IMR-90 (cell line): ENCODE measurements at regions of chr16 and their contacts with region 1.

Region 1: GRCh38 chr16:29700253-29700987 is 21.4 kb downstream of the QPRT start:
- DNase-seq: peak; percentile 87
- ATAC-seq: peak; percentile 99
- H3K4me3 ChIP-seq: no peak overlapping the region
- H3K27ac ChIP-seq: no peak overlapping the region
- H3K4me1 ChIP-seq: no peaks in the 10 kb centered on the region
- H3K27me3 ChIP-seq: peaks cover 10% of the 10 kb centered on the region; the same call in 1 of the 2 replicates
- CTCF ChIP-seq: peak; percentile 98
- POLR2A ChIP-seq: no peak
- RAD21 ChIP-seq: peak; percentile 97

Region 2: DNA sequence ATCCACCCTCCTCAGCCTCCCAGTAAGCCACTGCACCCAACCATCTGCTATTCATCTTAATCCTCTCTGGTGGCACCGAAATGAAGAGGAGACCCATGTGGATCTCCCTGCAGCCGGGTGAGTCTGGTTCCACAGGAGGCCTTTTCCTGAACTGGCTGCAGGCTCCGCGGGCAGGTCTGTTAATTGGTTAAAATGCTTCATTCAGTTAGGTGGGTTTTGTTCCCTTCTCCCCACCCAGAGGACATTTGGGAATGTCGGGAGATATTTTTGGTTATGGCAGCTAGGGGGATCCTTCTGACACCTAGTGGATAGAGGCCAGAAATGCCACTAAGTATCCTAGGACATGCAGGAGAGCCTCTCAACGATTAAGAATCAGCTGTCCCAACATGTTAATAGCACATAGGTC is 28.7 kb after region 1 on chr16:
- CTCF ChIA-PET with region 1: interaction called, 5 read pairs
- POLR2A ChIA-PET with region 1: no interaction called
- dilution Hi-C with region 1: no loop called
- in situ Hi-C with region 1: no loop called
- intact Hi-C with region 1: loop called (anchors 2 kb)
- DNase-seq: peak; percentile 49
- ATAC-seq: peak; percentile 86
- H3K4me3 ChIP-seq: no peak overlapping the region
- H3K27ac ChIP-seq: no peak overlapping the region
- H3K4me1 ChIP-seq: no peaks in the 10 kb centered on the region
- H3K27me3 ChIP-seq: peaks cover 11% of the 10 kb centered on the region
- CTCF ChIP-seq: peak; percentile 69
- POLR2A ChIP-seq: no peak
- RAD21 ChIP-seq: peak; percentile 57

Region 3: GRCh38 chr16:29805378-29806098 is 105.1 kb after region 1 on chr16:
- CTCF ChIA-PET with region 1: no interaction called
- POLR2A ChIA-PET with region 1: interaction called, 3 read pairs
- dilution Hi-C with region 1: no loop called
- in situ Hi-C with region 1: no loop called
- intact Hi-C with region 1: loop called (anchors 1 kb)
- DNase-seq: peak; percentile 97
- ATAC-seq: peak; percentile 69
- H3K4me3 ChIP-seq: peak overlapping the region; percentile 79
- H3K27ac ChIP-seq: peak overlapping the region; percentile 96
- H3K4me1 ChIP-seq: peaks cover 16% of the 10 kb centered on the region
- H3K27me3 ChIP-seq: no peaks in the 10 kb centered on the region
- CTCF ChIP-seq: no peak
- POLR2A ChIP-seq: peak; percentile 77; the same call in 1 of the 2 replicates
- RAD21 ChIP-seq: no peak

Region 4: DNA sequence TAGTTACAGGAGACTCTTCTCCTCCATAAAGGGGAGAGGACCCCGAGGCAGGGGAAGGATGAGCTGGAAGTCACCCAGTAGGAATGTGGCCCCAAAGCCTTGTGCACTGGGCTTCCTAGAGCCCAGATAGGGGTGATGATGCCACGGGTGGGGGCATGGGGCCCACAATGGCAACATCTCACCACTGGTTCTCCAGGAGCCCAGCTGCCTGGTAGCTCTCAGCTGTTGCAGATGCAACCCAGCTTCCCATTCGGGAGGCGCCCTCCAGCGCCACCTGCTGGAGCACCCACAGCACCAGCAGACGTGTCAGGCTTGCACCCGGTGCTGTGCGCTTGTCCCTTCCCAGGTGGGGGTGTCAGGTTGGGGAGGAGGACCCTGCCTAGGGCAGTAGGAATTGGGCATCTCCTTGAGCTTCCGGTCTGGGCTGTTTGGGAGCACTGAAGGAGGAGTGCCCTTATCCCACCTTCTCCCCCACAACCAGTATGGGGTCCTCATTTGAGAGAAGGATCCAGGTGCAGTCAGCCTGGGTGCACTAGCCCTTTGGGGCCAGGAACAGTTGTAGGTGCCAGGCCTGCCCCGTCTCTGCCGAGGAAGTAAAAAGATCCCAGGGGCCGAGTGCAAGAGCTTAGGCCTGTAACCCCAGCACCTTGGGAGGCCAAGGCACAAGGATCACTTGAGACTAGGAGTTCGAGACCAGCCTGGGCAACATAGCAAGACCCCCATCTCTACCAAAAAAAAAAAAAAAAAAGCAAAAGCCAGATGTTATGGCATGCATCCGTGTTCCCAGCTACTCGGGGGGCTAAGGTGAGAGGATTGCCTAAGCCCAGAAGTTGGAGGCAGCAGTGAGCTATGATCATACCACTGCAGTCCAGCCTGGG is 148.2 kb after region 1 on chr16:
- CTCF ChIA-PET with region 1: no interaction called
- POLR2A ChIA-PET with region 1: interaction called, 3 read pairs
- dilution Hi-C with region 1: no loop called
- in situ Hi-C with region 1: no loop called
- intact Hi-C with region 1: loop called (anchors 1 kb)
- DNase-seq: peak; percentile 63
- ATAC-seq: peak; percentile 84
- H3K4me3 ChIP-seq: no peak overlapping the region
- H3K27ac ChIP-seq: no peak overlapping the region
- H3K4me1 ChIP-seq: no peaks in the 10 kb centered on the region; the same call in 1 of the 2 replicates
- H3K27me3 ChIP-seq: no peaks in the 10 kb centered on the region
- CTCF ChIP-seq: peak; percentile 74
- POLR2A ChIP-seq: no peak
- RAD21 ChIP-seq: peak; percentile 76